CD8-positive, alpha-beta T cell (primary cell): ENCODE measurements at regions of chr12 and their contacts with region 1.

Region 1: GRCh38 chr12:57520053-57520871 is at the start of gene DDIT3:
- DNase-seq: peak; percentile 99 to 100 (median 100)
- ATAC-seq: peak; percentile 76
- H3K4me3 ChIP-seq: peak within 1 kb of the TSS; percentile 83 to 94
- H3K4me3 Mint-ChIP-seq: peak within 1 kb of the TSS; percentile 98
- H3K27ac ChIP-seq: peak within 1 kb of the TSS; percentile 97 to 100
- H3K27ac Mint-ChIP-seq: peak within 1 kb of the TSS; percentile 100
- H3K4me1 ChIP-seq: peaks cover 53% of the 10 kb centered on the region
- H3K4me1 Mint-ChIP-seq: peaks cover 54% of the 10 kb centered on the region
- H3K27me3 ChIP-seq: no peaks in the 10 kb centered on the region
- H3K27me3 Mint-ChIP-seq: no peaks in the 10 kb centered on the region
- CTCF ChIP-seq: no peak
- total RNA-seq, gene DDIT3: 137 to 143 TPM

Region 2: GRCh38 chr12:57229634-57230380 is 290.5 kb before region 1 on chr12 and contains the start of gene SHMT2:
- CTCF ChIA-PET with region 1: no interaction called
- POLR2A ChIA-PET with region 1: no interaction called
- intact Hi-C with region 1: loop called in 1 of 2 experiments (anchors 2 kb)
- DNase-seq: peak; percentile 74 to 96 (median 91)
- ATAC-seq: peak; percentile 56
- H3K4me3 ChIP-seq: peak within 1 kb of the TSS; percentile 63 to 72
- H3K4me3 Mint-ChIP-seq: peak within 1 kb of the TSS; percentile 92
- H3K27ac ChIP-seq: peak within 1 kb of the TSS; percentile 20 to 62
- H3K27ac Mint-ChIP-seq: peak within 1 kb of the TSS; percentile 67
- H3K4me1 ChIP-seq: peaks cover 53% of the 10 kb centered on the region
- H3K4me1 Mint-ChIP-seq: peaks cover 48% of the 10 kb centered on the region
- H3K27me3 ChIP-seq: peaks cover 15 to 19% of the 10 kb centered on the region in 2 experiments
- H3K27me3 Mint-ChIP-seq: peaks cover 23% of the 10 kb centered on the region
- CTCF ChIP-seq: no peak
- total RNA-seq, gene SHMT2: 14.2 to 18.6 TPM

Region 3: GRCh38 chr12:57476162-57476992 is 43.9 kb before region 1 on chr12:
- CTCF ChIA-PET with region 1: interaction called, 8 read pairs
- POLR2A ChIA-PET with region 1: interaction called, 19 read pairs
- intact Hi-C with region 1: loop called (anchors 1 to 2 kb)
- DNase-seq: peak; percentile 50 to 83 (median 81)
- ATAC-seq: peak; percentile 22
- H3K4me3 ChIP-seq: peak overlapping the region; percentile 70 to 83
- H3K4me3 Mint-ChIP-seq: peak overlapping the region; percentile 99
- H3K27ac ChIP-seq: peak overlapping the region; percentile 95 to 98
- H3K27ac Mint-ChIP-seq: peak overlapping the region; percentile 98
- H3K4me1 ChIP-seq: peaks cover 77% of the 10 kb centered on the region
- H3K4me1 Mint-ChIP-seq: peaks cover 84% of the 10 kb centered on the region
- H3K27me3 ChIP-seq: no peaks in the 10 kb centered on the region
- H3K27me3 Mint-ChIP-seq: no peaks in the 10 kb centered on the region
- CTCF ChIP-seq: peak; percentile 67

Region 4: DNA sequence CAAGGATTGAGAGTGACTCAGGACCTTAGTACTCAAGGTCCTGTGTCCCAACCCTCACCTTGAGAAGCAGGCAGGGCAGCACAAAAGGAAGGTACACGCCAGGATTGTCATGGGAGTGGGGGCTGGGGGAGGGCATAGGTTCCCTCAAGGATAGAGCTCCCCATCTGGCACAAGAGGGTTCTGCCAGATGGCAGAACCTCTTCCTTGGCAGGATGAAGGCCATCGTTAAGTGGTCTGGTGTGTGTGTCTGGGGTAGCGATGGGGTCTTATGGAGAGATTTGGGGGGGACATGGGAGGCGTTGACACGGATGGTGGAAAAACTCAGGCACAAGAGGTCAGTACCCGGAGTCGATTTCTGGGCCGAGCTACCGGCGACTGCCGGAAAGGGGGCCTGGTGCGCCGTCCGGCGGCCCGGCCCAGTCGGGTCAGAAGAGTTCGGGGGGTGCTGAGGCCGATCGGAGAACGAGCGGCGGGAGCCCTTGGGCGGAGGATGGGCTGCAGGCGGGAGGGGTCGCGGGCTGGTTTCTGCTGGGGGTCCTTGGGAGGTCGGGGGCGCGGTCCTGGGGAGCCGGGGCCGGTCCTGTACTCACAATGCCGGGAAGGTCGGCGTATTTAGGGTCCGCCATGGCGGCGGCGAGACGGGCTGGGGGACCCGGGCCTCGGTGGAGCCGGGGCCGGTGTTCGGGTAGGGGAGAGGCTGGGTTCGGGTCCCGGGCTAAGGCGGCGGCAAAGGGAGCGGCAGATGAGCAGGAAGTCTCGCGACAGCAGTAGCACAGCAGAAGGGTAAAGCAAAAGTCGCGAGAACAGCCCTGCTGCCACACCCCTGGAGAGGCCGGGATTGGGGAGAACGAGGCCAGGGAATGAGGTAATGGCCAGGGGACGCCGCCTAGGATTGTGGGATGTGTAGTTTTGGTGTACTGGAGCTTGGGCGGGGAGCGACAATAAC is 26.4 kb after region 1 on chr12 and contains the start of gene DCTN2:
- CTCF ChIA-PET with region 1: no interaction called
- POLR2A ChIA-PET with region 1: interaction called, 6 read pairs
- intact Hi-C with region 1: loop called (anchors 1 kb)
- DNase-seq: peak; percentile 79 to 97 (median 89)
- ATAC-seq: peak; percentile 94
- H3K4me3 ChIP-seq: peak within 1 kb of the TSS; percentile 63 to 94
- H3K4me3 Mint-ChIP-seq: peak within 1 kb of the TSS; percentile 92
- H3K27ac ChIP-seq: peak within 1 kb of the TSS; percentile 63 to 87
- H3K27ac Mint-ChIP-seq: peak within 1 kb of the TSS; percentile 91
- H3K4me1 ChIP-seq: peaks cover 27% of the 10 kb centered on the region
- H3K4me1 Mint-ChIP-seq: peaks cover 57% of the 10 kb centered on the region
- H3K27me3 ChIP-seq: no peaks in the 10 kb centered on the region
- H3K27me3 Mint-ChIP-seq: no peaks in the 10 kb centered on the region
- CTCF ChIP-seq: no peak
- total RNA-seq, gene DCTN2: 39.2 to 43.3 TPM